ENCODE measurements at regions of chr11 and their contacts with region 1.

Region 1: GRCh38 chr11:73625696-73626318 is 20.6 kb upstream of the PLEKHB1 start:
- DNase-seq: peak; percentile 73
- ATAC-seq: peak; percentile 73
- H3K4me3 Mint-ChIP-seq: no peak overlapping the region
- H3K27ac Mint-ChIP-seq: no peak overlapping the region
- H3K4me1 Mint-ChIP-seq: no peaks in the 10 kb centered on the region
- H3K27me3 Mint-ChIP-seq: peaks cover 28% of the 10 kb centered on the region

Region 2: DNA sequence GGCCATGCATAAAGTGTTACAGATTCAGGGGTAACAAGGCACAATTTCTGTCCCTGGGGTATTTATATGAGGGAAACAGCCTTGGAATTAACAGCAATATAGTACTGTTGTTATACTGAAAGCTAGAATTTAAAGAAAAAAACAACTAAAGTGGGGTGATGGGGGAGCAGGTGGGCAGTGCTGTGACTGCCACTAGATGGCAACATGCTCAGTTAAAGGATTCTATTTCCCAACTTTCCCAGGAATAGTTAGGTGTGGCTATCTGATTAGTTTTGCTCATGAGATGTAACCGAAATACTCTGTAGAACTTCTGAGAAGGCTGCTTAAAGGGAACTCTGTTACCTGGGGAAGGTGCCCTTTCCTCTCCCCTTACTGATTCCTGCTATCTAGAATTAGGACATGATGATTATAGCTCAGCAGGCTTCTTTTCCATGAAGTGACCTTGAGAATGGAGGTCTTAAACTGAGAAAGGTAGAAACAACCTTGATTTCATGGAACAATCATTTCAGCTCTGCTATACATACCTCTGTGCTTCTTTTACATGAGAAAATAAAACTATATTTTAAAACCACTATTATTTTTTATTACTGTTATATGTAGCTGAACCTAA is 147.0 kb before region 1 on chr11:
- CTCF ChIA-PET with region 1: interaction called, 13 read pairs
- DNase-seq: no peak
- ATAC-seq: no peak
- H3K4me3 Mint-ChIP-seq: no peak overlapping the region
- H3K27ac Mint-ChIP-seq: no peak overlapping the region
- H3K4me1 Mint-ChIP-seq: no peaks in the 10 kb centered on the region
- H3K27me3 Mint-ChIP-seq: no peaks in the 10 kb centered on the region

Region 3: DNA sequence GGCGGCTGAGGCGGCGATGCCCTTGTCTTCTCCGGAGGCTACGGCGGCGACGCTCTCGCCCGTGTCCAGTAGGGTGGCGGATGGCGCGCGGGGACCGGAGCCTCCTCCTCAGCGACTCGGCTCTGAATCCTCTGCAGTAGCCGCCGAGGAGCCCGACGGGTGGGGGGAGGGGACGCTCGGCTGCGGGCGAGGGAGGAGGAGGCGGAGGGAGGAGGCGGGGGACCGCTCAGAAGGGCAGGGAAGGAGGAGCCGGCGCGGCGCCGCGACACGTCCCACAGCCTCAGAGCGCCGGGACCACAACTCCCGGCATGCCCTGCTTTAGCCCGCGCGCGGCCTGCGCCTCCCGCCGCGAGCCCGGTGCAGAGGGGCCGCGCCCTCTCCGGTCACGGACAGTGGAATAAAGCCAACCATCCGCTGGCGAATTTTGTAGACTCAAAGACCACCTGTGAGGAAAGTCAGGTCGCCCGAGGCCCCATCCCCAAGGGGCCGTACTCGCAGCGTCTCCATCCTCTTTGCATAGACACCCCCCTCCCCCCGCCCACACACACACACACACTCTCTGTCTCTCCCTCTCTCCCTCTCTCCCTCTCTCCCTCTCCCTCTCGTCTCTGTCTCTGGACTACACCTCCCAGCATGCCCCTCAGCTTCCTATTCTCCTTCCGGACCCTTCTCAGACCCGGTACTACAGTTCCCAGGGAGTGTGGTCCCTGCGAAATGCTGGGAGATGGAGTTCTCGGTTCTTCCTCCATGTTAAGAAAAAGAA is 27.7 kb before region 1 on chr11 and contains the start of gene FAM168A:
- CTCF ChIA-PET with region 1: interaction called, 16 read pairs
- DNase-seq: peak; percentile 96
- ATAC-seq: peak; percentile 96
- H3K4me3 Mint-ChIP-seq: peak within 1 kb of the TSS; percentile 90
- H3K27ac Mint-ChIP-seq: peak within 1 kb of the TSS; percentile 87
- H3K4me1 Mint-ChIP-seq: peaks cover 30% of the 10 kb centered on the region
- H3K27me3 Mint-ChIP-seq: no peaks in the 10 kb centered on the region
- total RNA-seq, gene FAM168A: 19.3 to 20.5 TPM

Region 4: GRCh38 chr11:73612601-73613140 is 13.1 kb before region 1 on chr11:
- CTCF ChIA-PET with region 1: interaction called, 13 read pairs
- DNase-seq: no peak
- ATAC-seq: no peak
- H3K4me3 Mint-ChIP-seq: no peak overlapping the region
- H3K27ac Mint-ChIP-seq: no peak overlapping the region
- H3K4me1 Mint-ChIP-seq: no peaks in the 10 kb centered on the region
- H3K27me3 Mint-ChIP-seq: peaks cover 17% of the 10 kb centered on the region

Region 5: DNA sequence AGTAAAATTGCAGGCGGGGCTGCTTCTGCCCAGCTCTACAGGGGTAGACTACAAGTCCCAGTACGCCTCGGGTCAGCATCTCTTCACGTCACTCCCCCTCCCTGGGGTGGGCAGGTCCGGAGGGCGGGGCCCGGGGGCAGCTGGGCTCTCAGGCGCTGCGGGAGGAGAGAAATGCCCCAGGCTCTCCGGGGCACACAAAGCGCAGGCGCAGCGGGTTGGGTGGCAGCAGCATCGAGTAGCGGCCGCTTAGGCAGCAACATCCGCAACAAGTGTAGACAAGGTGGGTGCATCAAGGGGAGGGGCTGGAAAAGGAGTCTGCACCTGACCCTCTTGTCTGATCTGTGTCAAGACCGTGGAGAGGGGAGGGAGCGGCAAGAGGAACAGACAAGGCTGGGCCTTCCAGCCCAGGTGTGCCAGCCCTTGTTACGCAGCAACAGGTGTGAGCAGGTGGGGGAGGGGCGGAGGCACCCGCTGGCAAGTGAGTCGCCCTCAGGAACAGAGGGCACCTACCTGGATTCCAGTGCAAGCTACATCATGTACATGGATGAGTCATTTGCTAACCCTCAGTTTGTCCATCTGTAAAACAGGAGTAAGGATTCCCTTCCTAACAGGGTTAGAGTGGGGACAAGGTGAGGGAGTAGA is 21.8 kb after region 1 on chr11:
- CTCF ChIA-PET with region 1: interaction called, 27 read pairs
- DNase-seq: peak; percentile 95
- ATAC-seq: peak; percentile 99
- H3K4me3 Mint-ChIP-seq: peak overlapping the region; percentile 74
- H3K27ac Mint-ChIP-seq: peak overlapping the region; percentile 77
- H3K4me1 Mint-ChIP-seq: peaks cover 14% of the 10 kb centered on the region
- H3K27me3 Mint-ChIP-seq: peaks cover 6% of the 10 kb centered on the region

Region 6: GRCh38 chr11:73661035-73661628 is 35.3 kb after region 1 on chr11:
- CTCF ChIA-PET with region 1: interaction called, 136 read pairs
- DNase-seq: peak; percentile 87
- ATAC-seq: peak; percentile 93
- H3K4me3 Mint-ChIP-seq: no peak overlapping the region
- H3K27ac Mint-ChIP-seq: no peak overlapping the region
- H3K4me1 Mint-ChIP-seq: peaks cover 3% of the 10 kb centered on the region
- H3K27me3 Mint-ChIP-seq: no peaks in the 10 kb centered on the region

Region 7: GRCh38 chr11:73931039-73931645 is 305.3 kb after region 1 on chr11:
- CTCF ChIA-PET with region 1: interaction called, 11 read pairs
- DNase-seq: no peak
- ATAC-seq: peak; percentile 63
- H3K4me3 Mint-ChIP-seq: no peak overlapping the region
- H3K27ac Mint-ChIP-seq: no peak overlapping the region
- H3K4me1 Mint-ChIP-seq: no peaks in the 10 kb centered on the region
- H3K27me3 Mint-ChIP-seq: no peaks in the 10 kb centered on the region

Measured in activated CD8-positive, alpha-beta memory T cell treated with anti-CD3 and anti-CD28 coated beads, Interleukin-2, amount 10 ng/mL, durations not matched to agents 7 days and 5 days (primary cell).